Activated CD4-positive, alpha-beta T cell treated with anti-CD3 and anti-CD28 coated beads, Interleukin-2, amount 10 ng/mL, durations not matched to agents 24 days and 14 days (primary cell): ENCODE measurements at regions of chr12 and their contacts with region 1.

Region 1: DNA sequence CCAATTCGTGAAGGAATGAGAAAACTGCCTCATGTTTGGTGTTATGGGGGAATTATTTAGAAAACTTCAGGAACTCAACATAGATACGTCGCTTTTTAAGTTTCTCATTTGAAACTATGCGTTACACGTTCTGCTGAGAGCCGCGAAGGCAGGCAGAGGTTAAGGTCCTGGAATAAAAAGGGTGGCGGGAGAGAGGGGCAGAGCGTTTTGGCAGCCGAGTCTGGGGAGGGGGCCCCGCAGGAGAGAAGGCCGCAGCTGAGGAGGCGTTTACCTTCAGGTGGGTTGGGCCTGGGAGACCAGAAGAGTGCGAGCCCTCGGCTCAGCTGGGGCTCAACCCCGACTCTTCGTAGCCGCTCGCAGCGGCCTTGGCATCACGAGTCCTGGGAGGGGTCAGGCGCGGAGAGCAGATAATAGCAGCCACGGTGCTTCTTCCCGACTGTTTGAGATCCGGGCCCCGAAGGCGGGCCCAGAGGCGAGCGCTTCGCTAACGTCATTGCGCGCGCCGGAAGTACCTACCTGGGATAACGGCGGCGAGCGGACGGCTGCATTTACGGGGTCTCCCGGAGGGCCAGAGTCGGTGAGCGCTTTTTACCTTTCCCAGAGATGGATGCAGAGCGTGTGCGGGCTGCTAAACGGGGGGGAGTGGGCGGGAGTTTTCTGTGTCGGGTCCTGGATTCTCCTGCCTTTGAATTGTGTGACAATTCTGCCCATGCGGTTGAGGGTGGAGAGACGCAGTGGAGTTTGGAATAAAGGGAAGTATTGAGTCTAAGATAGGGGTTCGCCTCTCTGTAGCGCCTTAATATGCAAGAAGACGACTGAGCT is at the starts of genes PPHLN1 and ZCRB1:
- DNase-seq: peak; percentile 95
- H3K4me3 Mint-ChIP-seq: peak within 1 kb of the TSS; percentile 95
- H3K27ac Mint-ChIP-seq: peak within 1 kb of the TSS; percentile 98
- H3K4me1 Mint-ChIP-seq: peaks cover 32% of the 10 kb centered on the region
- H3K27me3 Mint-ChIP-seq: no peaks in the 10 kb centered on the region
- total RNA-seq, gene PPHLN1: 92.3 and 97.5 TPM in 2 replicates
- total RNA-seq, gene ZCRB1: 55.8 and 62.0 TPM in 2 replicates

Region 2: DNA sequence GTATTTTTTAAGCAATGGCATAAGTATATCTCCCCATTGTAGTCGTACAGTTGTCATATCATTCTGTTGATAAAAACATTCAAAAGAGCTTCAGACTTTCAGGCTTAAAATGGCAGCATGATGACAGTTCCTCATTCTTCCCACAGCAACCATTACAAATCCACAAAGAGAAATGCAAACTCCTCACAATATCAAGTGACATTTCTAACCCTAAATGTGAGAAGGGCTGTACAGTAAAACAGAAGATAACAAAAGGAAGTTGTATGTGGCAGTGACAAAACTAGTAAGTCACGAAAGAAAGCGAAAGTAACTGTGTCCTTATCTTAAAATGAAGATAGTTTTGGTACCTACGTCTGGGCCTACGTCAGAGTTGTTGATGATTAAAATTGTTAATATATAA is 227.9 kb before region 1 on chr12:
- intact Hi-C with region 1: loop called (anchors 2 kb)
- DNase-seq: peak; percentile 71
- H3K4me3 Mint-ChIP-seq: peak overlapping the region; percentile 88
- H3K27ac Mint-ChIP-seq: peak overlapping the region; percentile 86
- H3K4me1 Mint-ChIP-seq: peaks cover 33% of the 10 kb centered on the region
- H3K27me3 Mint-ChIP-seq: no peaks in the 10 kb centered on the region

Region 3: GRCh38 chr12:42144408-42145196 is 181.3 kb before region 1 on chr12 and contains the start of gene GXYLT1:
- intact Hi-C with region 1: loop called (anchors 5 kb)
- DNase-seq: peak; percentile 95
- H3K4me3 Mint-ChIP-seq: peak within 1 kb of the TSS; percentile 90
- H3K27ac Mint-ChIP-seq: peak within 1 kb of the TSS; percentile 85
- H3K4me1 Mint-ChIP-seq: peaks cover 28% of the 10 kb centered on the region
- H3K27me3 Mint-ChIP-seq: peaks cover 6% of the 10 kb centered on the region
- total RNA-seq, gene GXYLT1: 10.5 TPM in 2 replicates

Region 4: GRCh38 chr12:42237052-42237852 is 88.6 kb before region 1 on chr12:
- intact Hi-C with region 1: loop called (anchors 1 kb)
- DNase-seq: peak; percentile 91
- H3K4me3 Mint-ChIP-seq: peak overlapping the region; percentile 96
- H3K27ac Mint-ChIP-seq: peak overlapping the region; percentile 89
- H3K4me1 Mint-ChIP-seq: peaks cover 42% of the 10 kb centered on the region
- H3K27me3 Mint-ChIP-seq: no peaks in the 10 kb centered on the region

Region 5: DNA sequence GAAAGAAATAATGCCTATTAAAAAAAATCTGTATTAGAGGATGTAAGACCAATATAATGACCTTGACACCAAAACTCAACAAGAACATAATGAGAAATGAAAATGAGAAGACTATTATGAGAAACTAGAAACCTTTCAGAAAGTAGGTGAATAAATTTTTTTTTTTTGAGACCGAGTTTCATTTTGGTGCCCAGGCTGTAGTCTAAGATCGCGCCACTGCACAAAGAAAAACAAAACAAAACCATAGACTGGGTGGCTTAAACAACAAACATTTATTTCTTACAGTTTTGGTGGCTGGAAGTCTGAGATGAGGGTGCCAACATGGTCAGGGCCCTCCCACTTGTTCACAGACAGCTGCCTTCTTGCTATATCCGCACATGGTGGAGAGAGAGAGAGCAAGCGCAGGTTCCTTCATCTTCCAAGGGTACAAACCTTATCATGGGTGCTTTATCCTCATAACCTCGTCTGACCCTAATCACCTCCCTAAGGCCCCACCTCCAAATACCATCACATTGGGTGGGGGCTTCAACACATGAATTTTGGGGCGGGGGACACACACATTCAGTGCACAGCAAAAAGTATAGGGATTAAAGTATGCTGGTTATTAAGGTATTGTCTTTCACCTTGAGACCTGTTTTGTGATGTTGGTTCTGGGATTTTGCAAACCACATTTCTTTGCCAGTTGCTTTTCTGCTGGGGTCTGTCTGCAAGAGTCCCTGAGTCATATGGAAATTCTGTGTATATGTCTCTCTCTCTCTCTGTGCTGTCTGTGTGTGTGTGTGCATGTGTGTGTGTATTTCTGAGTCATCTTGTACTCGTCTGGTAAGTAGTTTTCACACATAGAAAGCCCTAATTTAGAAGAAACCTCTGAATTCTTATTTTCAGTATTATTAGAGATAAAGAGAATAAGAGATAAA is 26.2 kb before region 1 on chr12:
- intact Hi-C with region 1: loop called (anchors 2 kb)
- DNase-seq: peak; percentile 76
- H3K4me3 Mint-ChIP-seq: peak overlapping the region; percentile 15
- H3K27ac Mint-ChIP-seq: peak overlapping the region; percentile 90
- H3K4me1 Mint-ChIP-seq: peaks cover 11% of the 10 kb centered on the region
- H3K27me3 Mint-ChIP-seq: no peaks in the 10 kb centered on the region

Region 6: DNA sequence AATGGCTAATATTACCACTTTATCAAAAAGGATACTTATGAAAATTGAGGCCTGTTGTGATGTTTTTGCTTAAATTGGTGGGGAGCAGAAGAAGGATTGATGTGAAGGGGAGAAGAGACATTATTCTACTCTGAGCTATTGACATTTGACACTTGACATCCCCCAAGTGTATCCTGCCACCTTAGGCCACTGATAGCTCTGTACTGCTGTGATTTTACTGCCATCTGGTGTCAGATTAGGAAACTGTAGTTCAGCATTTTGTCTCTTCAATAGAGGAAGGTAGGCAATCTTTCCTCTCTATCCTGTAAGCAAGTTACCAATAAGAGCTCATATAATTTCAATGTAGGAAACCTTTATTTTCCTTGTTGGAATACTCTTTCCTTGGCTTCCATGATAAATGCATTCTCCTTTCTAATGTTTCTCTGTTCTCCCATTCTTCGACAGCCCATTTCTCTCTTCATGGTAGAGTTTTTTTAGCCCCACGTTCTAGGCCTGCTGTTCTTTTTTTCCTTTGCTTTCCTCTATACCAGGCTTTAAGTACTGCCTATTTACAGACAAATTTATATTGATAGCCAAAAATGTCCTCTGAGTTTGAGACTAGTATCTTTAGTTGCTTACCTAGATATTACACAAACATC is 46.4 kb after region 1 on chr12:
- intact Hi-C with region 1: loop called (anchors 5 kb)
- DNase-seq: peak; percentile 80
- H3K4me3 Mint-ChIP-seq: no peak overlapping the region
- H3K27ac Mint-ChIP-seq: no peak overlapping the region
- H3K4me1 Mint-ChIP-seq: peaks cover 2% of the 10 kb centered on the region
- H3K27me3 Mint-ChIP-seq: no peaks in the 10 kb centered on the region

Region 7: DNA sequence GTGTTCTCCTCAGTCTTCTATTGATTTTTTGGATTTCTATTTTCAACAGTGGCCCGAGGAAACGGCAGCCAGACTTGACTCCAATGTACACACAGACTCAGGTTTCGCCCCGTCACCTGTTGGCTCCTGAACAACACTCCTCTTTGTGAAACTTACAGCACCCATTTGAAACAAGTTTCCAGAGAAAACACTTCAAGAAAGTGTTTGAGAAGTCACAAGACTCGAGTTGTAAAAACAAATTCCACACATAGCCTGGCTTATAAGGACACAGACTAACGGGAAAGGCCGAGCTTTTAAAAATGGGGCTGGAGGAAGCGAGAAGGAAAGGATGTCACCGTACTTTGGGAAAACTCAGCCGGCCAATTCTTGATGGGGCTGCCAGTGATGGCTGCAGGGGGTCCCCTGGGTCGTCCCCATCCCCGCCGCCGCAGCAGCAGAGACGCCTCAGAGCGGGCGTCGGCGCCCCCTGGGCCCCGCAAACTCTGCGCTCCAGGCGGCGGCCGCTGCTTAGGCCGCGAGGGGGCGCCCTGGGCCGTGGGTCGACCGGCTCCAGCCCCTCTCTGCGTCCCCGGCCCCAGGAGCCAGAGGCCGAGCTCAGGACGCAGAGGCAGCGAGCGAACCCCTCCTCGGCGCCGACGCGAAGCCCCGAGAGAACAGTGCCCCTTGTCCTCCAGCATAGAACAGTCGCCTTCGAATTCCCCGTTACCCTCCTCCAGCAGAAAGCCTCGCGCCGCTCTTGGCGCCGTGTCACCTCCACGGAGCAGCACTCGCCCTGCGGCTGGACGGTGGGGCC is 156.8 kb after region 1 on chr12:
- intact Hi-C with region 1: no loop called
- DNase-seq: peak; percentile 87
- H3K4me3 Mint-ChIP-seq: peak overlapping the region; percentile 81
- H3K27ac Mint-ChIP-seq: no peak overlapping the region
- H3K4me1 Mint-ChIP-seq: peaks cover 8% of the 10 kb centered on the region
- H3K27me3 Mint-ChIP-seq: peaks cover 76% of the 10 kb centered on the region